ENCODE measurements at regions of chr1 and their contacts with region 1.

Region 1: DNA sequence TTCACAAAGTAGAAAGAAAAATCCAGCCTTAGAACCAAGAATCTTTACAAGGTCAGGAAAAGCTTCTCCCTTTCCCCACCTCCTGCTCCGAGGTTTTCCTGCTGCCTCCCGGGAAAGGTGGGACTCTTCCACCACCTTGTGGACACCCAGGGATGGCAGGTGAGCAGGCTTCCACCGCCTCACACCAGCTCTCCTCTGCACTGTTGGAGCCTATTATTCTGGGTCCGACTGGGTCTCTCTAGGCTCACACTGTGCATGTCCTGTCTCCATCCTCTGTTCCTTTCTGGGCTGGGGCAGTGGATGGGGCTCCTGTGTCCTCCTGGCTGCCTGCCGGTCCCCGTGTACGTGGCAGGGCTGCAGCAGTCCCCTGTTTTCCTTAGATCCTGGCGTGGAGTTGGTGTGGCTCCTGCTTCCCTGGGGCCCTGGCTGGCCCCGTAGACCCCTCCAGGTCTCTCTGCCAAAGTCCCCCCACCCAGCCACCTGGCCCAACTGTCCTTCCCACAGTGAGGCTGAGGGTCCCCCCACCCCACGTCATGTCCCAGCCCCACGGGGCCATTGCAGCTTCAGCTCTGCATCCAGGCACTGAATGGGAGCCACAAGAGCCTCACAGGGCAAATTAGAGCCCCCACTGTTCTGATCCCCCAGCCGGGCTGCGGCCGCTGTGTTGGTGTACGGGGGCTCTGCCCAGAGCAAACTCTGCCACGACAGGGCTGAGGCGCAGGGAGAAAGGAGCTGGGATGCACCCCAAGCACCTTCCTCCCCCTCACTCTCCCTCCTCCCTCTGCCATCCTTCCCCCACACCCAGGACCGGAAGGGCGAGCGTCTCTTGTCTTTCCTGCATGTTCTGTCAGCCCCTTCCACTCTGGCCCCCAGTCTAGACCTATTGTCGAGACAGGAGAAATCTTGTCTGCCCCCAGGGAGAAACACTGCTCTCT is 3.3 kb upstream of the SLC45A1 start:
- DNase-seq: peak; percentile 70
- H3K4me3 Mint-ChIP-seq: no peak overlapping the region
- H3K27ac Mint-ChIP-seq: no peak overlapping the region
- H3K4me1 Mint-ChIP-seq: peaks cover 9% of the 10 kb centered on the region
- H3K27me3 Mint-ChIP-seq: peaks cover 15% of the 10 kb centered on the region

Region 2: DNA sequence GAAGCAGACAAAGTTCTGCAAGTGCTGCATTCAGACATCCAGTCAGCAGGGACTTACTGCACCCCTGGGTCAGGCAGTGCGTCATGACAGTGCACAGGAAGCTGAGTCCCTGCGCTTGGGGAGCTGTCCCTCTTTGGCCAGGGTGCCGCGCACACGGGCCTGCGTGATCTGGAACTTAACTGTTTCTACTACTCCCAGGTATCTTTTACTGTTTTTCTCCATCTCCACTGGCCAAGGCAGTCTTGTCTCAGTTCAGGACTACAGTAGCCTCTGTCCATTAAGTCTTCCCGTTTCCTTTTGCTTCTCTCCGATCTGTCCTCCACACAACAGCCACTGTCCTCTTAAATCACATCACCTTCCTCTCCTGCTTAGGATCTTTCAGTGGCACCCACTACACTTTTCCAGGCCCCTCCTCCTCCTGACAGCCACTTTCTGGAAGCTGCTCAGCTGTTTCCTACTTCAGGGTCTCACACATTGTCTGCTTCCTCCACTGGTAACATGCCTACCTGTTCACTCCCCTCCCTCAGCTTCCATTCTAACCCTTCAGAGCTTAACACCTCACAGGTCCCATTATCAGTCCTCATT is 304.4 kb before region 1 on chr1:
- CTCF ChIA-PET with region 1: interaction called, 54 read pairs
- intact Hi-C with region 1: loop called (anchors 1 kb)
- DNase-seq: no peak
- H3K4me3 Mint-ChIP-seq: no peak overlapping the region
- H3K27ac Mint-ChIP-seq: no peak overlapping the region
- H3K4me1 Mint-ChIP-seq: no peaks in the 10 kb centered on the region
- H3K27me3 Mint-ChIP-seq: no peaks in the 10 kb centered on the region

Region 3: GRCh38 chr1:8533124-8533523 is 218.5 kb after region 1 on chr1:
- CTCF ChIA-PET with region 1: no interaction called
- intact Hi-C with region 1: no loop called
- DNase-seq: no peak
- H3K4me3 Mint-ChIP-seq: peak overlapping the region; percentile 44
- H3K27ac Mint-ChIP-seq: peak overlapping the region; percentile 74
- H3K4me1 Mint-ChIP-seq: peaks cover 26% of the 10 kb centered on the region
- H3K27me3 Mint-ChIP-seq: no peaks in the 10 kb centered on the region

Measured in activated naive CD4-positive, alpha-beta T cell treated with anti-CD3 and anti-CD28 coated beads for 36 hours (primary cell).